ENCODE measurements at regions of chr7 and their contacts with region 1.

Region 1: GRCh38 chr7:93636276-93636675 is 61.8 kb upstream of the CALCR start:
- DNase-seq: no peak
- ATAC-seq: no peak
- H3K4me3 ChIP-seq: no peak overlapping the region
- H3K27ac ChIP-seq: no peak overlapping the region
- H3K4me1 ChIP-seq: no peaks in the 10 kb centered on the region
- H3K27me3 ChIP-seq: no peaks in the 10 kb centered on the region
- CTCF ChIP-seq: no peak

Region 2: GRCh38 chr7:92528188-92528957 is 1107.9 kb before region 1 on chr7 and contains the starts of genes PEX1 and RBM48:
- CTCF ChIA-PET with region 1: no interaction called
- POLR2A ChIA-PET with region 1: no interaction called
- in situ Hi-C with region 1: no loop called
- intact Hi-C with region 1: no loop called
- DNase-seq: peak; percentile 99
- ATAC-seq: peak; percentile 97
- H3K4me3 ChIP-seq: peak within 1 kb of the TSS; percentile 99
- H3K27ac ChIP-seq: peak within 1 kb of the TSS; percentile 99
- H3K4me1 ChIP-seq: peaks cover 11% of the 10 kb centered on the region
- H3K27me3 ChIP-seq: no peaks in the 10 kb centered on the region
- CTCF ChIP-seq: peak; percentile 83
- total RNA-seq, gene PEX1: 13.9 TPM
- total RNA-seq, gene RBM48: 10.1 TPM

Region 3: GRCh38 chr7:93315896-93316295 is 320.4 kb before region 1 on chr7:
- CTCF ChIA-PET with region 1: no interaction called
- POLR2A ChIA-PET with region 1: no interaction called
- in situ Hi-C with region 1: no loop called
- intact Hi-C with region 1: no loop called
- DNase-seq: no peak
- ATAC-seq: no peak
- H3K4me3 ChIP-seq: no peak overlapping the region
- H3K27ac ChIP-seq: no peak overlapping the region
- H3K4me1 ChIP-seq: no peaks in the 10 kb centered on the region
- H3K27me3 ChIP-seq: no peaks in the 10 kb centered on the region
- CTCF ChIP-seq: no peak

Region 4: DNA sequence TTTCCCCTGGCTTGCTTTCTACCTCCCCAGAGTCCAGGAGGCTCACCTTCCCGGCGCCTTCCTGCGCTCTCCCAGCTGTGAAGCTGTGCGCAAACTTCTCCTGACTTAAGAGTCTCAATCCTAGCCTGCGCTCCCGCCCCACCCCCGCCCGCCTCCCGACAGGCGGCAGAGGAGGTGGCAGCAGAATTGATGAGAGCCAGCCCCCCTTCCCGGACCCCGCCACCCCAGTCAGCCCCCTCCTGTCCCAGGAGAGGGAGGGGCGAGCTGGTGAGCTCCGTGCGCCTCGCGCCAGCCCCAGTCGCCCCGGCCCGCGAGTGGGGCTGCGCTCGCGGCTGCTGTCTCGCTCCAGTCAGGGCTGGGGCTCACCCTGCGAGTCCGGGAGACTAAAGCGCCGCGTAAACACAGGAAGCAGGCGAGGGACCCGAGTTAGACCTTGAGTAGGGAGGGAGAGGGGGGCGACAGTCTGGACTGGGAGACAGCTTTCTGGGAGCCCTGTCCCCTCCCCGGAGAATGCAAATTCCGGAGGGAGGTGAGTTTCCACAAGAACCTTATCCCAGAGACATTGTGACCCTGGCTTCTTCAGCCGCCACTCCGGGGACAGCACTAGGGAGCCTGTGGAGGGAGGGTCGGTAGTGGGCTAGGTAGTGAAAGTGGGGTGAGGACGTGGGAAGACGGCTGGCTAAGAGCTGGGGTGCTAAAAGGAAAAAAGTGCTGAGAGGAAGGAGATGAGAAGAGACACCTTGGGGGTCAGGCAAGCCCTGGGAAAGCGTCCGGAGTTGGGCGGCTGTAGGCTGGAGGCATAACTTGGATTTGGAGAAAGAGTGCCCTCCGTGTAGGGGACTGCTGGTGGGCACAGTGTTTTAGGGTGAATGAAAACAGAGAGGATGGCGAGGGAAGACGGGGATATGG is 61.4 kb before region 1 on chr7 and contains the start of gene CALCR:
- CTCF ChIA-PET with region 1: no interaction called
- POLR2A ChIA-PET with region 1: no interaction called
- in situ Hi-C with region 1: no loop called
- intact Hi-C with region 1: loop called (anchors 10 kb)
- DNase-seq: no peak
- ATAC-seq: peak; percentile 77
- H3K4me3 ChIP-seq: peak within 1 kb of the TSS; percentile 15 to 23; a peak in 2 of 4 replicates
- H3K27ac ChIP-seq: no peak within 1 kb of the TSS
- H3K4me1 ChIP-seq: no peaks in the 10 kb centered on the region; the same call in 1 of the 2 replicates
- H3K27me3 ChIP-seq: peaks cover 39% of the 10 kb centered on the region
- CTCF ChIP-seq: no peak
- total RNA-seq, gene CALCR: 0.10 TPM